ENCODE measurements at regions of chr19 and their contacts with region 1.

Region 1: GRCh38 chr19:13861732-13862531 is 15.0 kb upstream of the NANOS3 start:
- DNase-seq: peak; percentile 93
- H3K4me3 Mint-ChIP-seq: peak overlapping the region; percentile 96
- H3K27ac Mint-ChIP-seq: peak overlapping the region; percentile 99
- H3K4me1 Mint-ChIP-seq: peaks cover 29% of the 10 kb centered on the region
- H3K27me3 Mint-ChIP-seq: peaks cover 28% of the 10 kb centered on the region

Region 2: DNA sequence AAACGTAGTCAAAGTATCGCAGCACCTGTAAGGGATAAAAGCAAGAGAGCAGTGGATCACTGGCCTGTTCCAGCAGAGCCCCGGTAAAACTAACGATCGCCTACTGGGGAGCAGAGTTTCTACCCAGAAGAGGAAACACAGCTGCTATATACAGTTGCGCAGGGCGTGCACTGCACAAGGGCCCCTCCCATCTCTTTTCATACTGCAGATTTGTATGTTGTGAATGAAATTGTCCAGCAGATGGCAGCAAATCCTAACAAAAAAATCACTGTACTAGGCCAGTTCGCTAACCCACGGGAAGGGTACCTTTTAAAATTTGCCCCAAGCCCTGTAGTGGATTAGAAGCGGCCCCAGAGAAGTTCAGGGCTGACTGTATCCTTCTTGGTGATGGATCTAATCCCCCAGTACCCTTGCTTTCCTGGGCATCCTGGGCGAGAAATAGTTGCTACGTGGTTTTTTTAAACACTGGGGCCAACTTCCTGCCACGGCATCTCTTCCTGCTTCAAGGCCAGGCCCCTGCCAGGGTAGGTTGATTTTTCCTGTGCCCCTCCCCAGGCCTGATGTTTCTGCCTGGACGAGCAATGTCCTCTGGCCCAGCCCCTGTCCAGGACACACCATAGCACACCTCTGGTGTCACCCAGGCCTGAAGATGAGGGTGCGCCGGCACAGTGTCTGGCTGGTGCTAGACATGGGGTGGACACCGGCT is 584.7 kb before region 1 on chr19:
- CTCF ChIA-PET with region 1: no interaction called
- intact Hi-C with region 1: loop called (anchors 1 kb)
- DNase-seq: peak; percentile 81
- H3K4me3 Mint-ChIP-seq: peak overlapping the region; percentile 11
- H3K27ac Mint-ChIP-seq: peak overlapping the region; percentile 64
- H3K4me1 Mint-ChIP-seq: peaks cover 15% of the 10 kb centered on the region
- H3K27me3 Mint-ChIP-seq: no peaks in the 10 kb centered on the region

Region 3: DNA sequence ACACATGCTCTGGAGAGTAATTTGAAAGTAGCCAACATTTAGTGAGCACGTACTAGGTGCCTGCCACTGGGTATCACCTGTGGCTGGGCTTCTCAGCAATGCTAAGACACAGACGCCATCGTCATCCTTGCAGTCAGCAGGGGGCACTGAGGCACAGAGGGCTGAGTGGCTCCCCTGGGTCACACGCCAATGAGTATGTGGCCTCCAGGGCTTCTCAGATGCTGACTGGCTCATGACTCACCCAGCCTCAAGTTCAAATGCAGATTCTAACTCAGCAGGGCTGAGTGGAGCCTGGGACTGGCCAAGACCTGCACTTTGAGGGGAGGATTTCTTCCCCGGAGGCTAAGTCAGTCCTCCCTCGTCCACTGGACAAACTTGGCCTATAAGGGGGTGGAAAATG is 240.5 kb before region 1 on chr19:
- CTCF ChIA-PET with region 1: no interaction called
- intact Hi-C with region 1: loop called (anchors 1 kb)
- DNase-seq: peak; percentile 85
- H3K4me3 Mint-ChIP-seq: no peak overlapping the region
- H3K27ac Mint-ChIP-seq: no peak overlapping the region
- H3K4me1 Mint-ChIP-seq: peaks cover 2% of the 10 kb centered on the region
- H3K27me3 Mint-ChIP-seq: peaks cover 49% of the 10 kb centered on the region

Region 4: GRCh38 chr19:13774217-13775191 is 87.4 kb before region 1 on chr19 and contains the start of gene C19orf53:
- CTCF ChIA-PET with region 1: interaction called, 29 read pairs
- intact Hi-C with region 1: no loop called
- DNase-seq: peak; percentile 92
- H3K4me3 Mint-ChIP-seq: peak within 1 kb of the TSS; percentile 98
- H3K27ac Mint-ChIP-seq: peak within 1 kb of the TSS; percentile 94
- H3K4me1 Mint-ChIP-seq: peaks cover 19% of the 10 kb centered on the region
- H3K27me3 Mint-ChIP-seq: no peaks in the 10 kb centered on the region
- total RNA-seq, gene C19orf53: 116 to 132 TPM

Region 5: DNA sequence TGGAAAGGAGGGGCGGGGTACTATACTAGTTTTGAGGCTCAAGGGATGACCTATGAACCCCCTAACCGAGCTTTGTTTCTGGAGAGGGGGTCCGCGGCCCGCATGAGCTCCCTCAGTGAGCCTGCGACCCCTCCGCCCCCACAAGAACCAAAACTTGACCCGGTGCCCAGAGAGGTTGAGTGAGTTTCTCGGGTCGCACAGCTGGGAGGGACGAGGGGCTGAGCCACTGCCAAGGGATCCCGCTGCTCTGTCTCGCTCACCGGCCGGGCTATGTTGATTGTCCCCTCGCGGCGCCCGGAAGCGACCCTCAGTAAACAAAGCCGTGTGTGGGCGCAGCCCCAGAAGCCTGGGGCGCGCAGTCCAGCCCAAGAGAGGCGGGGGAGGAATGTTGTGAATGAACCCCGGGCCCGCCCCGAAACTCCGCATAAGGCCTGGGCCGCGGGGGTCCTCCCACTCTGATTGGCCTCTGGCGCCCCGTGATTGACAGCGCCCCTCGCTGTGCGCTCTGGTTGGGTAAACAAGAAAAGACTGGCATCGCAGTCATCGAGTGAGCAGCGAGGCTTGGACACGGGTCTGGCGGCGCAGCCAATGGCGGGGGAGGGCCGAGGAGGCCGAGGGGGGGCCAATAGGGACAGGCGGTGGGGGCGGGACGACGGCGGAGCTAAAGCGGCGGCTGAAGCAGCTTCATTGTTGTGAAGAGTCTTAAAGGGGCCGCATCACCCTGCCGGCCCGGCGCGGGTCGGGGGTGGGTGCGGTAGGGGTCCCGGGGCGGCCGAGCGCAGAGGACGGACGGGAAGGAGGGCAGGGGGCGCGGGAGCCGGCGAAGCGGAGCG is 67.0 kb before region 1 on chr19 and contains the start of gene ZSWIM4:
- CTCF ChIA-PET with region 1: interaction called, 10 read pairs
- intact Hi-C with region 1: no loop called
- DNase-seq: peak; percentile 98
- H3K4me3 Mint-ChIP-seq: peak within 1 kb of the TSS; percentile 95
- H3K27ac Mint-ChIP-seq: peak within 1 kb of the TSS; percentile 86
- H3K4me1 Mint-ChIP-seq: peaks cover 29% of the 10 kb centered on the region
- H3K27me3 Mint-ChIP-seq: no peaks in the 10 kb centered on the region
- total RNA-seq, gene ZSWIM4: 6.7 to 7.1 TPM

Region 6: DNA sequence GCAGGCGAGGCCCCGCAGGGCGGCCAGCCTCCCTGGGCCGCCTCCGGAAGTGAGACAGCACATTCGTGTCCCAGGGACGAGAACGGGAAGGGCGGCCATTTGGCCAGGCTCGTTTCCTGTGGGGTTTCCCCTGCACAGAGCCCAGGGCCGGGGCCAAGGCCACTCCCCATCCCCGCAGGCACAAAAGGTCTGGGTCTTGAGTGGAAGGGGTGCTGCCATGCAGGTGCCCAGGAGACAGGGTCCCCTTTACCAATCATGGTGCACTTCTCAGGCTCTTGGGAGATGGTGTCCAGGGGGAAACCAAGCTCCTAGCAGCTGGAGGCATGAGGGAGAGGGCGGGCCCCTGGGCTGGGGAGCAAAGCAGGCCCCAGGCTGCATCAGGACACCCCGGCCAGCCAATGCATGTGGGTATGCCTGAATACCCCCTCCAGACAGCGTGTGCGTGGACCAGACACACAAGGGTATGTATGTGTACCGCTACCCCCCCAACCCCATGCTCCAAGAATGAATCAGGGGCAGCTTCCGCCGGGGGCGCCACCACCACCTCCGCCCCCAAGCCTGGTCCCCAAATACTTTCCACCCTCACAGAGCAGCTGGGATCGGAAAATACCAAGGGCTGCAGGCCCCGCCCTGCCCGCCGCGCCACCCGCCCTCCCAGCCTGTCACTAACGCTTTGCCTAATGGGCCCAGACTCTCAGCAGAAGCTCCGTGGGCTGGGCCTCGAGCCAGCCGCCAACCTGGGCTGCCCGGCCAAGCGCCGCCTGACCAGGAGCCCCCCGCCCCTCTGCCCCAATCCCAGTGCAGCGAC is 22.6 kb before region 1 on chr19:
- CTCF ChIA-PET with region 1: interaction called, 19 read pairs
- intact Hi-C with region 1: loop called (anchors 1 kb)
- DNase-seq: peak; percentile 95
- H3K4me3 Mint-ChIP-seq: peak overlapping the region; percentile 93
- H3K27ac Mint-ChIP-seq: peak overlapping the region; percentile 99
- H3K4me1 Mint-ChIP-seq: peaks cover 47% of the 10 kb centered on the region
- H3K27me3 Mint-ChIP-seq: no peaks in the 10 kb centered on the region

Region 7: DNA sequence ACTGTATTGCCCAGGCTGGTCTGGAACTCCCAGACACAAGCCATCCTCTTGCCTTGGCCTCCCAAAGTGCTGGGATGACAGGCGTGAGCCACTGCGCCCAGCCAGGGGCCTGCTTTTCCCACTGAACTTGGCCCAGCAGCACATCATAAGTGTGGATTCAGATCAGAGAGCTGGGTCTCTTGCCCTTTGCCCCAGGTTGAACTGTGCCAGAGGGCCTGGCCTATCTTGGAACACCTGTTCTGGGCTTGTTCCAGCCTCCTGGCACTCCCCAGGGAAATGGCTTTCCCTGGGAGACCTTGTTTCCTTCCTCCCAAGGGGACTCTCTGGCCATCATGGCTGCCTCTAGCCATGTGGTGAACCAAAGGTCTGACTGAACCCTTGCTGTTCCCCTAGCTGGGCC is 47.5 kb after region 1 on chr19:
- CTCF ChIA-PET with region 1: no interaction called
- intact Hi-C with region 1: no loop called
- DNase-seq: no peak
- H3K4me3 Mint-ChIP-seq: no peak overlapping the region
- H3K27ac Mint-ChIP-seq: no peak overlapping the region
- H3K4me1 Mint-ChIP-seq: peaks cover 19% of the 10 kb centered on the region
- H3K27me3 Mint-ChIP-seq: no peaks in the 10 kb centered on the region

Measured in activated naive CD4-positive, alpha-beta T cell treated with anti-CD3 and anti-CD28 coated beads for 36 hours (primary cell).